PC-3 (cell line): ENCODE measurements at regions of chr12 and their contacts with region 1.

Region 1: DNA sequence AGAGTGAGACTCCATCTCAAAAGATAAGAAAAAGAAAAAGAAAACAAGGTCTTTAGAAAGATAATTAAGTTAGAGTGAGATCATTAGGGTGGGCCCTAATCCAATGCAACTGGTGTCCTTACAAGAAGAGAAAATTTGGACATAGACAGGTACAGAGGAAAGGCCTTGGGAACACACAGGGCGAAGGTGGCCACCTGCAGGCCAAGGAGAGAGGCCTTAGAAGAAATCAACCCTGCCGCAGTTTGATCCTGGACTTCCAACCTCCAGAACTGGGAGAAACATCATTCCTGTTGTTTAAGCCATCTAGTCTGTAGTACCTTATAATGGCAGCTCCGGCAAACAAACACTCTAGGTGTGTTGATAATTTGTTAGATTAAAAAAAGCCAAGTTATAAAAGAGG is 491.9 kb downstream of the MED13L start:
- DNase-seq: peak; percentile 21
- ATAC-seq: peak; percentile 35
- H3K4me3 ChIP-seq: no peak overlapping the region
- H3K27ac ChIP-seq: no peak overlapping the region
- H3K4me1 ChIP-seq: no peaks in the 10 kb centered on the region
- H3K27me3 ChIP-seq: peaks cover 44% of the 10 kb centered on the region
- CTCF ChIP-seq: peak; percentile 46

Region 2: DNA sequence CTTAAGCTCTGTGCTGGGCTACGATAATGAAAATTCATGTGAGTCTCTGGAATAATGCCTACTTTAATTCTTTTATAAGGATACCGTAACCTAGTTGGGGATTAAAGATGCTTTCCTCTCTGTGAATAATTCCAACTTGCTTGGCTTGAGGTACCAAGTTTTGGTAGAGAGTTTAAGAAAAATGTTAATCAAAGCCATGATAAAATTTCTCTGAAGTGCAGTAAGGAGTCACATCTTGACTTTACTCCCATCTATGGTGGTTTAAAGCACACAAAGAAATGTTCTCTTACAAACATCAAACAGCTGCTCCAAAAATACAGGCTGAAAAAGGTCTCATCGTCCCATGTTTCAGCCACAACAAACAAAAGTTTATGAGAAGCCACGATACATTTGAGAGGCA is 816.8 kb before region 1 on chr12:
- CTCF ChIA-PET with region 1: no interaction called
- POLR2A ChIA-PET with region 1: interaction called, 11 read pairs
- intact Hi-C with region 1: no loop called
- DNase-seq: no peak
- ATAC-seq: no peak
- H3K4me3 ChIP-seq: no peak overlapping the region
- H3K27ac ChIP-seq: no peak overlapping the region
- H3K4me1 ChIP-seq: no peaks in the 10 kb centered on the region
- H3K27me3 ChIP-seq: no peaks in the 10 kb centered on the region
- CTCF ChIP-seq: no peak

Region 3: GRCh38 chr12:115687094-115687493 is 98.5 kb before region 1 on chr12:
- CTCF ChIA-PET with region 1: no interaction called
- POLR2A ChIA-PET with region 1: interaction called, 13 read pairs
- intact Hi-C with region 1: no loop called
- DNase-seq: no peak
- ATAC-seq: no peak
- H3K4me3 ChIP-seq: no peak overlapping the region
- H3K27ac ChIP-seq: no peak overlapping the region
- H3K4me1 ChIP-seq: peaks cover 4% of the 10 kb centered on the region; the same call in 1 of the 2 replicates
- H3K27me3 ChIP-seq: peaks cover 35% of the 10 kb centered on the region
- CTCF ChIP-seq: no peak